ENCODE measurements at regions of chr2 and their contacts with region 1.

Region 1: GRCh38 chr2:98634401-98635092 is 26.2 kb downstream of the UNC50 start:
- DNase-seq: peak; percentile 58
- H3K4me3 Mint-ChIP-seq: peak overlapping the region; percentile 19
- H3K27ac Mint-ChIP-seq: peak overlapping the region; percentile 86
- H3K4me1 Mint-ChIP-seq: peaks cover 38% of the 10 kb centered on the region
- H3K27me3 Mint-ChIP-seq: no peaks in the 10 kb centered on the region

Region 2: GRCh38 chr2:98608116-98608999 is 26.2 kb before region 1 on chr2 and contains the starts of genes COA5 and UNC50:
- CTCF ChIA-PET with region 1: interaction called, 5 read pairs
- POLR2A ChIA-PET with region 1: interaction called, 17 read pairs
- DNase-seq: peak; percentile 93
- H3K4me3 Mint-ChIP-seq: peak within 1 kb of the TSS; percentile 87
- H3K27ac Mint-ChIP-seq: peak within 1 kb of the TSS; percentile 68
- H3K4me1 Mint-ChIP-seq: peaks cover 60% of the 10 kb centered on the region
- H3K27me3 Mint-ChIP-seq: no peaks in the 10 kb centered on the region
- total RNA-seq, gene COA5: 26.3 TPM
- total RNA-seq, gene UNC50: 32.7 to 32.8 TPM

Region 3: GRCh38 chr2:98810278-98810937 is 175.9 kb after region 1 on chr2:
- CTCF ChIA-PET with region 1: no interaction called
- POLR2A ChIA-PET with region 1: no interaction called
- DNase-seq: no peak
- H3K4me3 Mint-ChIP-seq: no peak overlapping the region
- H3K27ac Mint-ChIP-seq: no peak overlapping the region
- H3K4me1 Mint-ChIP-seq: peaks cover 10% of the 10 kb centered on the region
- H3K27me3 Mint-ChIP-seq: peaks cover 20% of the 10 kb centered on the region

Measured in activated CD4-positive, alpha-beta memory T cell treated with anti-CD3 and anti-CD28 coated beads, Interleukin-2, amount 10 ng/mL, durations not matched to agents 7 days and 5 days (primary cell).